Activated CD4-positive, alpha-beta T cell treated with anti-CD3 and anti-CD28 coated beads, Interleukin-2, amount 10 ng/mL, durations not matched to agents 24 days and 14 days (primary cell): ENCODE measurements at regions of chr12 and their contacts with region 1.

Region 1: DNA sequence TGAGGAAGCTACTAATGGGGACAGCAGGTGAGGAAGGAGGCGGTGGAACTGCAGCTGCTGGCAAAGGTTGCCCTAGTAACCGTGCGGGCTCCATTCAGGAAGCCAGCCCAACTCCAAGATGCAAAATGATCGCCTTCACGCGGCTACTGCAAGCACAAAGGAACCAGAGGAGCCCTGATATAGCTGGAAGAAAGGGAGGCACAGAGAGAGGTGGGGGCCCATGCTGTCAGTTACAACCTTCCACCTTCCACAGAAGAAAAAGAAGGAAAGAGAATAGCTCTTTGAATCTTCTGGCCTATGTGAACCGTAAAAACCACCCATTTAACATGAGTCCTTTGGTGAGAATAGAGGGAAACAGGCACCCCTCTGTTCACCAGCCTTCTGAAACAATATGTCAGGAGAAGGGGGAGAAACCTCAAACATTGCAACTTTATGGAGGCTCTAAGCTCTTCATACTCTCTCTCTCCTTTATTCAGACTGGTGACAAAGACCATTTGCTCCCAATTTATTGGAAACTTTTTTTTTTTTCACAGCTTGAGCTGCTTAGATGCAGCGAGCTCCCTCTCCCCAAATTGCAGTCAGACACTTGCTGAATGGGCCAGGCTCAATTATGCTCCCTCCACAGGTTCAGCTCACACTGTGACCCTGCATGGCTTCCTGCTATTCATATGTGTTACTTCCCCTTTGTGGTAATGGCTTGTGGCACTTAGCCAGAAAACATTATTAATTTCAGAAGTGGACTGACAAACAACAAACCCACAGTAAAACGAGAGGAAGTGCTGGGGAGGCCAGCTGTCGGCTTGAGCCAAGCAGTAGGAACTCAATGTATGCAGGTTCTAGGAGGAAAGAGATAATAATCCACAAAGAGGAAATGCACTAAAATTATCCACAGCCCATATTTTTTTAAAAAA is 6.2 kb downstream of the DUSP6 start:
- DNase-seq: peak; percentile 83
- H3K4me3 Mint-ChIP-seq: peak overlapping the region; percentile 98
- H3K27ac Mint-ChIP-seq: peak overlapping the region; percentile 90
- H3K4me1 Mint-ChIP-seq: peaks cover 56% of the 10 kb centered on the region
- H3K27me3 Mint-ChIP-seq: no peaks in the 10 kb centered on the region

Region 2: DNA sequence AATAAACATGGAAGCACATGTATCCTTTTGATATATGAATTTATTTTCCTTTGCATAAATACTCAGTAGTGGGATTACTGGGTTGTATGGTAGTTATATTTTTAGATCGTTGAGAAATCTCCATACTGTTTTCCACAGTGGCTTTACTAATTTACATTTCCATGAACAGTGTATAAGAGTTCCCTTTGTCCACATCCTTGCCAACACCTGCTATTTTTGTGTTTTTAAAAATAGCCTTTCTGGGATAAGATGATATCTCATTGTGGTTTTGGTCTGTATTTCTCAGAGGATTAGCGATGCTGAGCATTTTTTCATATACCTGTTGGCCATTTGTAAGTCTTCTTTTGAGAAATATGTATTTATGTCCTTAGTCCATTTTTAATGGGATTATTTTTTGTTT is 436.6 kb before region 1 on chr12:
- intact Hi-C with region 1: no loop called
- DNase-seq: no peak
- H3K4me3 Mint-ChIP-seq: no peak overlapping the region
- H3K27ac Mint-ChIP-seq: no peak overlapping the region
- H3K4me1 Mint-ChIP-seq: no peaks in the 10 kb centered on the region
- H3K27me3 Mint-ChIP-seq: no peaks in the 10 kb centered on the region

Region 3: DNA sequence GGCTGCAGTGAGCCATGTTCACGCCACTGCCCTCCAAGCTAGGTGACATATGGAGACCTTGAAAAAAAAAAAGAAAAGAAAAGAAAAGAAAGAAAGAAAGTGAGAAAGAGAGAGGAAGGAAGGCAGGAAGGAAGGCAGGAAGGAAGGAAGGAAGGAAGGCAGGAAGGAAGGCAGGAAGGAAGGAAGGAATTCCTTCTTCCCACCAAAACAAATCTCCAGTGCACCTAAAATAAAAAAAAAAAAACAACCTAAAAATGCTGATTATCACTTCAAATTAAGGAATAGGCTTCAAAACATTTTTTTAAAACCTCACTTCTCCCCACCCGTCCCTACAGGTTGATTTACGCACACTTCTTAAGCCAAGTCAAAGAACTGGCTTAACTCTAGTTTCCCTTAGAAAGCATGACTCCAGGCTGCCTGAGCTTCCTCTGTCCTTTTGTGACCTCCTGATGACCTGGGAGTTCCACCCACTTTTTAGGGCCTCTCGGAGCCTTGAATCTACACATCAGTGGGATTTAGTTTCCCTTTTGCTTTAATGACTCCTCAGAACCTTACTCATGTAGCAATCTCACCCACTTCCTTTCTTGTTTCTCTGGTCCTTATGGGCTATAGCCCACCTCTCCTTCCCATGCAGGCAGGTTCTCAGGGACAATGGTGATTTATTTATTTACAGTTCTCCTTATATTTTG is 12.4 kb before region 1 on chr12:
- intact Hi-C with region 1: loop called (anchors 1 kb)
- DNase-seq: peak; percentile 81
- H3K4me3 Mint-ChIP-seq: peak overlapping the region; percentile 67
- H3K27ac Mint-ChIP-seq: peak overlapping the region; percentile 87
- H3K4me1 Mint-ChIP-seq: peaks cover 28% of the 10 kb centered on the region
- H3K27me3 Mint-ChIP-seq: no peaks in the 10 kb centered on the region

Region 4: DNA sequence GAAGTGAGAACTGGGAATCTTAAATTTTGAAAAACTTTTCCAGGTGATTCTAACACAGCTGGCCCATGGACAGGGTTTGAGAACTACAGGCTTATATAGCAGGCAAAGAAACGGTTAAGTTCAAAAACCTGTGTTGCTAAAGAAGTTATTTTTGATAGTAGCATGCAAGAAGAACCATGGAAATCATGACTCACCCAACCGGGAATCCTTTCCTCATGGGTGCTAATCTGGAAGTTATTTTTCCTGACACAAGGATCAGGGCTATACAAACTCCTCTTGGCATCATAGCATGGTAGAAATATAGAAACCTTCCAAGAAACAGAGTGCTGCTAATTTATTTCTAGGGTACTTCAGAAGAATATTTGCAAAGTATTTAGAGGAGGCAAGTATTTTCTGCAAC is 1020.2 kb after region 1 on chr12:
- intact Hi-C with region 1: no loop called
- DNase-seq: no peak
- H3K4me3 Mint-ChIP-seq: no peak overlapping the region
- H3K27ac Mint-ChIP-seq: no peak overlapping the region
- H3K4me1 Mint-ChIP-seq: no peaks in the 10 kb centered on the region
- H3K27me3 Mint-ChIP-seq: no peaks in the 10 kb centered on the region